Sigmoid colon (tissue), 7 donors: ENCODE measurements at regions of chr15 and their contacts with region 1.

Region 1: DNA sequence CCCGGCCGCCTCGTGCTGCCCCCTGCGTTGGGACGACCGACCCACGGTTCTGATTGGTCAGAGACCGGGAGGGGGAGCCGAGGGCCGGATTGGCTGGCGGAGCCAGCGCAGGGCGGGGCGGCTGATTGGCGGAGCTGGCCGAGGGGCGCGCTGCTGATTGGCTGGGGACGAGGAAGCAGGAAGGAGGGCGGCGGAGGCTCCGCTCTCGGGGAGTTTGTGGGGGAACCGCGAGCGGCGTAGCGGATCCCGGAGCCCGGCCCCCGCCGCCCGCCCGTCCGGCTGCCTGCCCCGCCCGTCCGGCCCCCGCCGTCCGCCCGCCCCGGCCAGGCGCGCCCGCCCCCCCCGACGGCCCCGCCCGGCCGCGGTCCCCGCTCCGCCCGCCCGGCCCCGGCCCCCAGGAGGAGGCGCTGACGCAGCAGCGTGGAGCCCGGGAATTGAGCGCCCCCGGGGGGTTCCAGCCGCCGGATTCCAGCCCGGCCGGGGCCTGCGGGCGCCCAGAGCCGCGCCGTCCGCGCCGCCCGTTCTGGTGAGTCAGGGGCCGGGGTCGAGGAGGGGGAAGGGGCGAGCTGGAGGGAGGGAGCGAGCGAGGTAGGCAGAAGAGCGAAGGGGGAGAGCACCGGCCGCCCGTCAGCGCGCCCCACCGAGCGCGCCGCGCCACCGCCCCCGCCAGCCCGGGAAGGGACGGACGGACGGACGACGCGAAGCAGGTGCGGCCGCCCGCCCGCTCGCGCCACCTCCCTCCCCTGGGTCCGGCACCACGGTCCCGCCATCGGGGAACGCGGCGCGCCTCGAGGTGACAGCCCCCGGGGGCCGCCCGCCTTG is at the start of gene BAHD1:
- DNase-seq: peak; percentile 98
- H3K4me3 ChIP-seq: peak within 1 kb of the TSS; percentile 89 to 98 (median 92)
- H3K27ac ChIP-seq: peak within 1 kb of the TSS; percentile 79 to 85 (median 82)
- H3K4me1 ChIP-seq: peaks cover 0 to 65% (median 57%) of the 10 kb centered on the region in 4 donors
- H3K27me3 ChIP-seq: peaks cover 15 to 25% (median 19%) of the 10 kb centered on the region in 3 donors
- CTCF ChIP-seq: no peak
- EP300 ChIP-seq: no peak
- POLR2A ChIP-seq: no peak
- total RNA-seq, gene BAHD1: 7.7 to 16.3 (median 9.3) TPM

Region 2: GRCh38 chr15:40421246-40422157 is 19.5 kb before region 1 on chr15:
- intact Hi-C with region 1: no loop called
- DNase-seq: peak; percentile 85
- H3K4me3 ChIP-seq: no peak overlapping the region
- H3K27ac ChIP-seq: no peak overlapping the region
- H3K4me1 ChIP-seq: peaks cover 0 to 17% (median 10%) of the 10 kb centered on the region in 4 donors
- H3K27me3 ChIP-seq: no peaks in the 10 kb centered on the region
- CTCF ChIP-seq: peak; percentile 91 to 94 (median 92)
- EP300 ChIP-seq: no peak
- POLR2A ChIP-seq: no peak

Region 3: DNA sequence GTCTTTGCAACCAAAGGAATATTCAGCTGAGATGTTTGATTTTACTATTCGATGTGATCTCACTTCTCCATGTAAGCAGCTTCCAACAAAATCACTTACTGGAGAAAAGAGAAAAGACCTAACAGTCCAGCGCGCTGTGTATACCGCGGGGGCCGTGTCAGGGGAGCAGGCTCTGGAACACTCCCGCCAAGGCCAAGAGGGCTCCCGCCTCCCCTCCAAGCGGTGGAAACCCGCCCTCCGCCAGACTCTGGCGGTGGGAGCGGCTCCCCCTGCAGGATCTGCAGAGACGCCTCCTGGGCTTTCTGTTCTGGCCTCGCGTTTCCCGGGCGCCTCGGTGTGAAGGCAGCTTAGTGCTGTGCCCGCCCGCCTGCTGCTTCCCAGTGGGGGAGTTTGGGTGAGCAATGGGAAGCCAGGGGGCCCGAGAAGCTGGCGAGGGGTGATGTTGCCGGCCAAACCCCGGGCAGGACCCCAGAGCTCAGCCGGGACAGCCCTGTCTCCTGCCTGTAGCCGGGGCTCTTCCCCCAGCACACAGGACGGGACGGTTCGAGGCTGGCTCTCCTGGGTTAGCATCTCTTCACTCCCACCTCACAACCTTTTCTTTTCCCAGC is 66.1 kb after region 1 on chr15:
- intact Hi-C with region 1: loop called (anchors 2 kb)
- DNase-seq: peak; percentile 89
- H3K4me3 ChIP-seq: peak overlapping the region; percentile 4 to 38 (median 32)
- H3K27ac ChIP-seq: peak overlapping the region in 2 of 4 donors; percentile 32 to 35
- H3K4me1 ChIP-seq: peaks cover 0 to 21% (median 11%) of the 10 kb centered on the region in 4 donors
- H3K27me3 ChIP-seq: no peaks in the 10 kb centered on the region
- CTCF ChIP-seq: peak; percentile 44 to 68 (median 58)
- EP300 ChIP-seq: no peak
- POLR2A ChIP-seq: no peak